B cell (primary cell): ENCODE measurements at regions of chr4 and their contacts with region 1.

Region 1: GRCh38 chr4:145061318-145061920 is 36.6 kb downstream of the ANAPC10 start:
- DNase-seq: peak; percentile 56
- ATAC-seq: peak; percentile 58
- H3K4me3 ChIP-seq: no peak overlapping the region
- H3K4me3 Mint-ChIP-seq: no peak overlapping the region
- H3K27ac ChIP-seq: no peak overlapping the region
- H3K27ac Mint-ChIP-seq: no peak overlapping the region
- H3K4me1 ChIP-seq: no peaks in the 10 kb centered on the region
- H3K4me1 Mint-ChIP-seq: no peaks in the 10 kb centered on the region
- H3K27me3 ChIP-seq: no peaks in the 10 kb centered on the region
- H3K27me3 Mint-ChIP-seq: no peaks in the 10 kb centered on the region
- CTCF ChIP-seq: peak; percentile 87

Region 2: GRCh38 chr4:143773998-143774895 is 1287.2 kb before region 1 on chr4:
- CTCF ChIA-PET with region 1: interaction called, 4 read pairs
- POLR2A ChIA-PET with region 1: no interaction called
- intact Hi-C with region 1: loop called (anchors 5 kb)
- DNase-seq: peak; percentile 74
- ATAC-seq: peak; percentile 98
- H3K4me3 ChIP-seq: no peak overlapping the region
- H3K4me3 Mint-ChIP-seq: peak overlapping the region; percentile 40
- H3K27ac ChIP-seq: no peak overlapping the region
- H3K27ac Mint-ChIP-seq: no peak overlapping the region
- H3K4me1 ChIP-seq: peaks cover 0 to 4% of the 10 kb centered on the region in 2 donors
- H3K4me1 Mint-ChIP-seq: peaks cover 7% of the 10 kb centered on the region
- H3K27me3 ChIP-seq: peaks cover 0 to under 1% (median 0%) of the 10 kb centered on the region in 4 experiments
- H3K27me3 Mint-ChIP-seq: no peaks in the 10 kb centered on the region
- CTCF ChIP-seq: peak; percentile 88

Region 3: GRCh38 chr4:144174401-144175067 is 886.9 kb before region 1 on chr4:
- CTCF ChIA-PET with region 1: interaction called, 11 read pairs
- POLR2A ChIA-PET with region 1: no interaction called
- intact Hi-C with region 1: no loop called
- DNase-seq: peak; percentile 58
- ATAC-seq: peak; percentile 56
- H3K4me3 ChIP-seq: no peak overlapping the region
- H3K4me3 Mint-ChIP-seq: no peak overlapping the region
- H3K27ac ChIP-seq: no peak overlapping the region
- H3K27ac Mint-ChIP-seq: no peak overlapping the region
- H3K4me1 ChIP-seq: peaks cover 0 to 4% of the 10 kb centered on the region in 2 donors
- H3K4me1 Mint-ChIP-seq: peaks cover 6% of the 10 kb centered on the region
- H3K27me3 ChIP-seq: peaks cover 0 to 5% (median 0%) of the 10 kb centered on the region in 4 experiments
- H3K27me3 Mint-ChIP-seq: peaks cover 5% of the 10 kb centered on the region
- CTCF ChIP-seq: peak; percentile 78

Region 4: DNA sequence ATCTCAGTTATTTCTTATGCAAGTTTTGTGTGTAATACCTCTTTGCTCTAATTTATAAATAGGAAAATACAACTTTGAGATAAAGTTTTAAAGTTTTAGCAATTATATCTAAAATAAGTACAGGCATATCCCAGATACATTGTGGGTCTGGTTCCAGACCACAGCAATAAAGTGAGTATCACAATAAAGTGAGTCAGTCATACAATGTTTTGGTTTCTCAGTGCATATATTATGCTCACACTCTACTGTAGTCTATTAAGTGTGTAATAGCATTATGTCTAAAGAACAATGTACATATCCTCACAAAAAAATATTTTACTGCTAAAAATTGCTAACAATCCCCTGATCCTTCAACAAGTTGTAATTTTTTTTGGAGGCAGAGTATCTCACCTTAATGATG is 12.6 kb before region 1 on chr4:
- CTCF ChIA-PET with region 1: interaction called, 12 read pairs
- POLR2A ChIA-PET with region 1: no interaction called
- intact Hi-C with region 1: no loop called
- DNase-seq: no peak
- ATAC-seq: no peak
- H3K4me3 ChIP-seq: no peak overlapping the region
- H3K4me3 Mint-ChIP-seq: no peak overlapping the region
- H3K27ac ChIP-seq: no peak overlapping the region
- H3K27ac Mint-ChIP-seq: no peak overlapping the region
- H3K4me1 ChIP-seq: no peaks in the 10 kb centered on the region
- H3K4me1 Mint-ChIP-seq: peaks cover 5% of the 10 kb centered on the region
- H3K27me3 ChIP-seq: no peaks in the 10 kb centered on the region
- H3K27me3 Mint-ChIP-seq: no peaks in the 10 kb centered on the region
- CTCF ChIP-seq: no peak

Region 5: DNA sequence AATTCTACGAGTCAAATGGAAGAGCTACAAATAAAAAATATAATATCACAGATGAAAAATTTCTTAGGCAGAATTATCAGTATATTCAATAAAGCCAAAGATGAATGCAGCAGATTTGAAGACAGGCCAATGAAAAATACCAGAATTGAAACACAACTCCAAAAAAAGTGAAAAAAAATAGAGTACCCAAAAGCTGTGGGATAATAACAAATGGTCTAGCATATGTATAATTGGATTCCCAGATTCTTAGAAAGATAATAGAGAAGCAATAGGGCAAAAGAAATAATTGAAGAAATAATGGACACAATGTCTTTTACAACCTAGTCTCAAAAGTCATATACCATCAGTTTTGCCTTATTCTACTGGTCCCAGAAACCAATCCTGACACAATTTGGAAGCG is 32.2 kb after region 1 on chr4:
- CTCF ChIA-PET with region 1: no interaction called
- POLR2A ChIA-PET with region 1: no interaction called
- intact Hi-C with region 1: no loop called
- DNase-seq: no peak
- ATAC-seq: no peak
- H3K4me3 ChIP-seq: no peak overlapping the region
- H3K4me3 Mint-ChIP-seq: no peak overlapping the region
- H3K27ac ChIP-seq: no peak overlapping the region
- H3K27ac Mint-ChIP-seq: no peak overlapping the region
- H3K4me1 ChIP-seq: peaks cover 14 to 15% of the 10 kb centered on the region in 2 donors
- H3K4me1 Mint-ChIP-seq: peaks cover 27% of the 10 kb centered on the region
- H3K27me3 ChIP-seq: no peaks in the 10 kb centered on the region
- H3K27me3 Mint-ChIP-seq: no peaks in the 10 kb centered on the region
- CTCF ChIP-seq: no peak

Region 6: GRCh38 chr4:145260091-145260490 is 198.7 kb after region 1 on chr4:
- CTCF ChIA-PET with region 1: no interaction called
- POLR2A ChIA-PET with region 1: no interaction called
- intact Hi-C with region 1: no loop called
- DNase-seq: no peak
- ATAC-seq: no peak
- H3K4me3 ChIP-seq: no peak overlapping the region
- H3K4me3 Mint-ChIP-seq: no peak overlapping the region
- H3K27ac ChIP-seq: no peak overlapping the region
- H3K27ac Mint-ChIP-seq: no peak overlapping the region
- H3K4me1 ChIP-seq: no peaks in the 10 kb centered on the region
- H3K4me1 Mint-ChIP-seq: no peaks in the 10 kb centered on the region
- H3K27me3 ChIP-seq: no peaks in the 10 kb centered on the region
- H3K27me3 Mint-ChIP-seq: peaks cover 7% of the 10 kb centered on the region
- CTCF ChIP-seq: no peak